ENCODE measurements at regions of chr11 and their contacts with region 1.

Region 1: GRCh38 chr11:66363805-66364535 is 7.6 kb downstream of the SLC29A2 start:
- H3K4me3 ChIP-seq: no peak overlapping the region
- H3K27ac ChIP-seq: no peak overlapping the region
- H3K4me1 ChIP-seq: no peaks in the 10 kb centered on the region
- CTCF ChIP-seq: peak; percentile 51

Region 2: DNA sequence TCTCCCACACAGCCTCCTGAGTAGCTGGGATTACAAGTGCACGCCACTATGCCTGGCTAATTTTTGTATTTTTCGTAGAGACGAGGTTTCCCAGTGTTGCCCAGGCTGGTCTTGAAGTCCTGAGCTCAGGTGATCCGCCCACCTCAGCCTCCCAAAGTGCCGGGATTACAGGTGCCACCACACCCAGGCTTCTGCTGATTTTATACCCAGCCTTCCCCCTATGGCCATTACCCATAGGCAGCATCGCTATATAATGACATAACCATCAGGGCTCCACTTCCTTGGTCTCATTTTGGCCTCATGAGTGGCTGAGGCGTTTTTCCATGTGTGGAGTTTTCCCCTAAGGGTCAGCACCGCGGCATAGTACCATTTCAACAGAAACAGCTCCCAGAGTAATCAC is 156.1 kb before region 1 on chr11:
- CTCF ChIA-PET with region 1: no interaction called
- POLR2A ChIA-PET with region 1: no interaction called
- H3K4me3 ChIP-seq: no peak overlapping the region
- H3K27ac ChIP-seq: no peak overlapping the region
- H3K4me1 ChIP-seq: no peaks in the 10 kb centered on the region
- CTCF ChIP-seq: no peak

Region 3: DNA sequence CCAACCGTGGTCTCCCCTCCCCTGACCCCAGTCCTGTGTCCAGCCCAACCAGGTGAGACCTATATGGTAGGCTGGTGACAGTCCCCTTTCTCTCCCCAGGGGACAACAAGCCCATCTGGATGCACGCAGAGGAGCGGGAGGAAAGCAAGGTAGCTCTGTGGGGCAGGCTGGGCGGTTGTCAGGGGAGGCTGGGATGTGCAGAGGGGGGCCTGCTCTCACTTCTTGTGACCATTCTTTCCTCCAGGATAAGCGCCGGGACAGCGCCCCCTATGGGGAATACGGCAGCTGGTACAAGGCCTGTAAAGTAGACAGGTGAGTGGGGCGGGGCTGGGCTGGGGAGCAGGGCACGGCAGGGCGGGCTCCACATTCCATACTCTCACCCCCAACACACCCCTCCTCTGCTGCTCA is 99.0 kb before region 1 on chr11:
- CTCF ChIA-PET with region 1: no interaction called
- POLR2A ChIA-PET with region 1: no interaction called
- H3K4me3 ChIP-seq: no peak overlapping the region
- H3K27ac ChIP-seq: no peak overlapping the region
- H3K4me1 ChIP-seq: peaks cover 2% of the 10 kb centered on the region; the same call in 1 of the 2 replicates
- CTCF ChIP-seq: peak; percentile 23; the same call in 1 of the 2 replicates

Region 4: DNA sequence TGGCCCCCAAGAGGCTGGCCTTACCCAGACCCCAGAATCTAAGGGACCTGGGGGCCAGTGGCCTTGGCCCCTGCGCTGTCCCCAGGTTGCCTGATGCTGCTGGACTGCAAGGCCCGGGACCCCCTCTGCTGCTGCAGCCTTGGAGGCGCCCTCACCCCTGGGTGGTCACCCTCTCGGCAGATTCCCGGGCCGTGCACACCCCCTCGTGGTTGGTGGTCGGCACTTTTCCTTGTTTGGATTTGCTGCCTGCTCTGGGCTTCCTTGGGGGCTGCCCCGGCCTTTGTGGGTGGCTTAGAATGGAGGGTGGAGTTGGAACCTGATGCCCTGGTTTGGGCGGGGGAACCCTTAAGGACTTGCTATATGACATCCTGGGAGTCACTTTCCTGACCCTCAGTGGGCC is 33.0 kb before region 1 on chr11:
- CTCF ChIA-PET with region 1: no interaction called
- POLR2A ChIA-PET with region 1: no interaction called
- H3K4me3 ChIP-seq: no peak overlapping the region
- H3K27ac ChIP-seq: no peak overlapping the region
- H3K4me1 ChIP-seq: no peaks in the 10 kb centered on the region
- CTCF ChIP-seq: no peak

Region 5: GRCh38 chr11:66344550-66345315 is 19.2 kb before region 1 on chr11 and contains the start of gene BRMS1:
- CTCF ChIA-PET with region 1: interaction called, 24 read pairs
- POLR2A ChIA-PET with region 1: interaction called, 6 read pairs
- H3K4me3 ChIP-seq: peak within 1 kb of the TSS; percentile 52
- H3K27ac ChIP-seq: peak within 1 kb of the TSS; percentile 26; the same call in 1 of the 2 replicates
- H3K4me1 ChIP-seq: no peaks in the 10 kb centered on the region
- CTCF ChIP-seq: 0 out of 2 replicates have a peak, but pooled peaks have one; percentile 25

Region 6: GRCh38 chr11:66491315-66491935 is 127.5 kb after region 1 on chr11:
- CTCF ChIA-PET with region 1: no interaction called
- POLR2A ChIA-PET with region 1: no interaction called
- H3K4me3 ChIP-seq: no peak overlapping the region
- H3K27ac ChIP-seq: no peak overlapping the region
- H3K4me1 ChIP-seq: no peaks in the 10 kb centered on the region
- CTCF ChIP-seq: 0 out of 2 replicates have a peak, but pooled peaks have one; percentile 22

Measured in HEK293 (cell line).